A549 (cell line): ENCODE measurements at regions of chr13 and their contacts with region 1.

Region 1: GRCh38 chr13:32175307-32175706 is 139.9 kb downstream of the ZAR1L start:
- DNase-seq: no peak
- ATAC-seq: no peak
- H3K4me3 ChIP-seq: no peak overlapping the region
- H3K27ac ChIP-seq: no peak overlapping the region
- H3K4me1 ChIP-seq: no peaks in the 10 kb centered on the region
- CTCF ChIP-seq: no peak
- EP300 ChIP-seq: no peak
- POLR2A ChIP-seq: no peak
- RAD21 ChIP-seq: no peak

Region 2: DNA sequence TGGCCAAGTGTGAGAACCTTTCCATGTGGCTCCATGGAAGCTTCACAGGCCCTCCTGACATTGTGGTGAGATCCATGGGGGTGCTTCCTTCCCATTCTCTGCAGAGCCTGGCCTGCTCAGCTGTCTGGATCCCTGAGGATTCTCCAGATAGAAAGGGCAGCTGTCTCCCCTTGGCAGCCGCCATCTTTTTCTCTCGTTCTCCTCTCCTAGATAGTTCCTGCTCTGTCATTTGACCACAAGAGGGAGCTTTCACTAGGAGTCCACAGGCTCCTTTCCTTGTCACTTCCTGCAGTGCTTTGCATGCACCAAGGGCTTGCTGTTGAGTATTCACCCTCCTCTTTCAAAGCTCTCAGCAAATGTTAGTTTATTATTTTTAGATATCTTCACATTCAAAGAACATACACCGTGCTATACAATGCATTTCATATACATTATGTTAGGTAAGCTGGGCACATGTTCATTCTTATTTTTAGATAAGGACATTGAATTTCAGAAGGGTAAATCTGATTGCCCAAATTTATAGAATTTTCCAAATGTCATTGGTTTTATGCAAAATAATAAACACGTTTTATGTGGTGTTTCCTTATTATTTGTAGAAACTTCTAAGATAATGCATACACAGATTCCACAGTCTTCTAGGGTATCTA is 10.6 kb before region 1 on chr13:
- CTCF ChIA-PET with region 1: interaction called, 11 read pairs
- POLR2A ChIA-PET with region 1: no interaction called
- DNase-seq: peak; percentile 50 to 76
- ATAC-seq: peak; percentile 97 to 99
- H3K4me3 ChIP-seq: no peak overlapping the region
- H3K27ac ChIP-seq: peak overlapping the region in 1 of 2 experiments; percentile 68; a peak in 2 of 6 replicates
- H3K4me1 ChIP-seq: no peaks in the 10 kb centered on the region
- CTCF ChIP-seq: peak; percentile 49
- EP300 ChIP-seq: no peak
- POLR2A ChIP-seq: no peak
- RAD21 ChIP-seq: peak in 1 of 2 experiments; percentile 38; a peak in 2 of 5 replicates